Upper lobe of right lung (tissue), 1 donor: ENCODE measurements at regions of chrX and their contacts with region 1.

Region 1: DNA sequence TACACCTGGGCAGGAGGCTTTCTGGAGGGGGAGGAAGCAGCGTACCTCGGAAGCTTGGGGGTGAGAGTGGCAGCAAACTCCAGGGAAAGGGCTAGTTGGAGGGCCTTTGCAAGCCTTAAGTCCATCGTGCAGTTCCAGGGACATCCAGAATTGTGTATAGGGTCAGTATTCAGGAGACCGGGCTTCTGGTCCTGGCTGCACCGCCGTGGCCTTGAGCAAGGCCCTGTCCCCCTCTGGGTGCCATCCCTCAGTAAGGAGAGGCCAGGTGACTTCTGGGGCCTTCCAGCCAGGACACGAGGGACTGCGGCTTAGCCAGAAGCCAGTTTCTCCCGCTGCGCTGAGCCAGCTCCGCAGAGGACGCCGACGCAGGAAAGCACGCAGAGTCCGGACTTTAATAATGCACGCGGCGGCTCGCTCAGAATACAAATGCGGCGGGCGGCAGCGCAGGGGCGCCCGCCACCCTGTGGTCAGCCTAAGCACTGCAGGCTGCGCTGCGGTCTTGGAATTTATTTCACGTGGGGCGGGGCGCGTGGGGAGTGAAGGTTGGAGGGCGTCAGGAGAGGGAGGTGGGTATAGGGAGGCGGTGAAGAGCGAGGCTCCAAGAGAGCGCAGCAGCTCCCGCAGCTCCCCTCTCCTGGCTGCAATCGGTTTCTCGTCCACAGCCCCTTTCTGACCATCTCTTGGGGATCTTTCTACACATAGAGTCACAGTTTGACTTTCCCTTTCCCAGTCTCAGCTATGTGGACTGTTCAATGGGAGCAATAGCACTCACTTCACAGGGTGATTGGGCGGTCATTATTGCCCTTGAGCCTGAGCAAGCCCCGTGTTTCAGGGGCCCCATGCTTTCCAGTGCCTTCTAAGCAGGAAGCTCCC is 94.1 kb upstream of the GPR50 start:
- DNase-seq: peak; percentile 76
- ATAC-seq: peak; percentile 98
- H3K4me3 ChIP-seq: no peak overlapping the region
- H3K27ac ChIP-seq: no peak overlapping the region
- H3K4me1 ChIP-seq: no peaks in the 10 kb centered on the region
- H3K27me3 ChIP-seq: no peaks in the 10 kb centered on the region
- CTCF ChIP-seq: peak; percentile 86

Region 2: DNA sequence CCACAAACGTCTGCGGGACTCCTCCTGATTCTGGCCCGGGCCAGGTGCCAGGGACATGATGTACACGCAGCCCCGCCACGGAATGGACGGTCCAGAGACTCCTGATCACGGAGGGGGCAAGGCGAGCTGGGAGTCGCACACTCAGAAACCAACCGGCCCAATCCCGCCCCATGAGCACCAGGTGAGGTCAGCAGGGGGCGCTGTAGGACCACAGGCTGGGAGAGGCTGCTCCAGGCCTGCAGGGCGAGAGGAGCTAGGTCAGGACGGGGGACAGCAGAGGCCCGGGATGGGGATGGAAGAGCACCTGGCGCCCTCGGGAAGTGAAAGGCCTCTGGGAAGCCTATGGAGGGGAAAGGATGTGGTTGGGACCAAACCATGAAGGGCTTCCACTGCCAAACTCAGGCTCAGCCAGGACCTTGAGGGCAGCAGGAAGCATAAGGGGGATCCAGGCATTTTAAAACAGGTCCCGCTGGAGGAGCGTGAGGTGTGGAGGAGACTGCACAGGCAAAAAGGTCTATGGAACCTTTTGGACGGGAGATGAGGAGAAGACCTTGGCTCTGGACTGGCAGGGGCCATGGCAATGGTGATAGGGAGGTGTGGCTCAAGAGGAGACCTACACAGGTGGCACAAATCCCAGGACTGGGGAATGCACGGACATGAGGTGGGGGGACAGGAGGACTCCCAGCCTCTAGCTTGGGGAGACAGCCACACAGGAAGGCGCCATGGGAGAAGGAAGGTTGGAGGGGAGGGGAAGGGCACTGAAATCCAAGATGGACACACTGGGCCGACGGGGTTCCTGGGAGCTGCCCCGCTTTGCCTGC is 310.0 kb before region 1 on chrX:
- intact Hi-C with region 1: loop called (anchors 10 kb)
- DNase-seq: peak; percentile 86
- ATAC-seq: peak; percentile 94
- H3K4me3 ChIP-seq: no peak overlapping the region
- H3K27ac ChIP-seq: no peak overlapping the region
- H3K4me1 ChIP-seq: no peaks in the 10 kb centered on the region
- H3K27me3 ChIP-seq: no peaks in the 10 kb centered on the region
- CTCF ChIP-seq: peak; percentile 72

Region 3: DNA sequence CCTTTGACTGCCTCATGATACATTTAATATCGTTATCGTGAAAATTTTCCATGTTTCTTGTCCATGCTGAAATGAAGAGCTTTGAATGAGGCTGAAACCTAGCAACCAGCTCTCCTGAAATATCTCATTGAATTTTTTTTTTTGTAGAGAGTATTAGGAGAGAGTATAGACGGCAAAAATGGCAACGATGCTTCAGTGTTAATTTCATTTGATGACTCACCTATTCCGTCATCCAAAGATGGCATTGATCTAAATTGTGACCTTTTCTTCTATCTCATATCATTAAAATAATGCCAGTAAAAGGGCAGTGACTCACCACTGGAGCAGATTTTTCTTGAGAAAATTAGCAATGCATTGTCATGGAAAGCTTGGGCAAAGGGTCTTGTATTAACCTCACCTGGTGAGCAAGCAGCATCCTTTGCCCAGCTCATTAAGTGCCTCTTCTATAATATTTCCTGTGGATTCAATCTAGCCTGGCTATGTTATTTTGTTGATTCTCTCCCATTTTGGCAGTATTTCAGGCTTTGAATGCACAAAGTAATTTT is 334.3 kb after region 1 on chrX:
- intact Hi-C with region 1: no loop called
- DNase-seq: no peak
- ATAC-seq: no peak
- H3K4me3 ChIP-seq: no peak overlapping the region
- H3K27ac ChIP-seq: no peak overlapping the region
- H3K4me1 ChIP-seq: no peaks in the 10 kb centered on the region
- H3K27me3 ChIP-seq: no peaks in the 10 kb centered on the region
- CTCF ChIP-seq: no peak

Region 4: DNA sequence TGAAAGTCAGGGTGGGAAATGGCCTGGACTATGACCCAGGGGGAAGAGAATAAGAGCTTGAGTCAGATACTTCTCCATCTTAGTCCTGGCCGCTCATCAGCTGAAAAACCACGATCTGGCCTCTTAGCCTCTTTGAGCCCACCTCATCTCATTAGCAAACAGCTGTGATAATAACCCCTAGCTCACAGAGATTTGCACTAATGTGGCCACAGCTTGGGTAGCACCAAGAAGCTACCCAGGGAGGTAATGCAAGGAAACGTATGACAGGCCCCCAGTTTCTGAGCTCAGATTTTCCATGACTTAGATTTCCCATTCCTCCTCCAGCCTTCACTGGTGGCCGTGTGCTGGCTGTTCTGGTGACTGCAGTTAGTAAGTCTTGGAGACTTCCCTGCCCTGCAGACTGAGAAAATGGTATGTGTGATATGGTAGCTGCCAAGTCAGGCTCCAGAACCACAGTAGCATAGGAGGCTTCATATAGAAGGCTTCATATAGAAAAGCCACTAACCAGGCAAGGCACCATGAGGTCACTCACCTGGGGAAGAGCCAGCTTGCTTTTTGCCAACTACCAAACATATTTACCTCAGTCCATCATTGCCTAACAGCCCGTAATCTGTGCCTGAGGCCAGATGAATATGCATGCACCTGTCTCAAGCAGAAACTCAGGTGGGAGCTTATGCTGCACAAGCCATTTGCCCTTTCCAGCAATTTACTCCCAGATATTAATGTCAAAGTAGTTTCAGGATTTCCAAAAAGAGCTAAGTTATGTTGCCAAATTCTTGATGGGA is 943.5 kb after region 1 on chrX:
- intact Hi-C with region 1: no loop called
- DNase-seq: no peak
- ATAC-seq: no peak
- H3K4me3 ChIP-seq: no peak overlapping the region
- H3K27ac ChIP-seq: no peak overlapping the region
- H3K4me1 ChIP-seq: no peaks in the 10 kb centered on the region
- H3K27me3 ChIP-seq: no peaks in the 10 kb centered on the region
- CTCF ChIP-seq: no peak